Endothelial cell of umbilical vein (primary cell): ENCODE measurements at regions of chr6 and their contacts with region 1.

Region 1: DNA sequence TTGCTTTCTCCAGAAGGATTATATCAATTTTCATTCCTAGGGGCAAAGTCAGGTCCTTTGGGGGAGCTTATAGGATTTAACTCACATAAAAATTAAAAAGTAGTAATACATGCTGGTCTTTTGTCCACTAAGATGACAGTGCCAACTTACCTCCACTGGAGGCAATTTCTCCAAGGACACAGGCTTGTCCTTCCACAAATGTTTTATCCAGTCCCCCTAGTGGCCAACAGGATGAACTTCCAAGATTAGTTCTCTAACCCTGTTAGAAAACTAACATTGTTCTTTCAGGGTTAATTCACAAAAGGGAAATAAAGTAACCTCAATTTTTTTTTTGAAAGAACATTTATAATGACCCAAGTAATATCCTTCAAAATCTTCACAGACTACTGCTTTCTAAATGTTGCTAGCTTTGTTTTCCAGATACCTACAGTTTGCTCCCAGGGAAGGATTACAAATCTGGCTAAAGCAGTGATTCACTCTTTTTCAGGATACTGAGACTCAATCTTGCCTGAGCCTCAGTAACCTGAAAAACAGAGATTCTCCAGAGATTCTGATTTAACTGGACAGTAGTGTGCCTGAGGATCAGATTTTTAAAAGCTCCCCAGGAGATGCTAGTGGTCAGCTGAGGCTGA is 31.7 kb upstream of the UBR2 start:
- DNase-seq: peak; percentile 37
- H3K4me3 ChIP-seq: no peak overlapping the region
- H3K27ac ChIP-seq: no peak overlapping the region
- H3K4me1 ChIP-seq: no peaks in the 10 kb centered on the region
- H3K27me3 ChIP-seq: peaks cover 0 to 2% of the 10 kb centered on the region in 2 experiments
- CTCF ChIP-seq: peak; percentile 70 to 76
- POLR2A ChIP-seq: no peak

Region 2: DNA sequence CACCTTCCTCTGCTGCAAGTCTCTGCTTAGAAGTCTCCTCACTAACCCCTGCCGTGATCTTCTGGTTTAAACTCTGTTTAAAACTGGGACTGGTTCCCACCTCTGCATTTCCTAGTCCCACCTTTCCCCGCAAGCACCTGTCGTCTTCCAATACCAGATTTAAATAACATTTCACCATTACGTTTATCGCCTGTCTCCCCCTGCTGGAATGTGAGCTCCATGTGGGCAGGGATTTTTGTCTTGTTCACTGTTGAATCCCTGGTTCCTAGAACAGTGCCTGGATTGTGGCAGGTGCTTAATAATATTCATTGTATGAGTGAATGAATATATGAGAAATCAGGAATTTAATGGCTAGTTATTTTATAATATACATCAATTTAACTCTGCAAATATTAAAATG is 356.3 kb before region 1 on chr6:
- CTCF ChIA-PET with region 1: no interaction called
- POLR2A ChIA-PET with region 1: no interaction called
- dilution Hi-C with region 1: no loop called
- intact Hi-C with region 1: no loop called
- DNase-seq: no peak
- H3K4me3 ChIP-seq: no peak overlapping the region
- H3K27ac ChIP-seq: no peak overlapping the region
- H3K4me1 ChIP-seq: no peaks in the 10 kb centered on the region
- H3K27me3 ChIP-seq: peaks cover 2 to 6% of the 10 kb centered on the region in 2 experiments
- CTCF ChIP-seq: peak in 1 of 2 donors; percentile 21
- POLR2A ChIP-seq: no peak

Region 3: GRCh38 chr6:42260972-42261371 is 271.2 kb before region 1 on chr6:
- CTCF ChIA-PET with region 1: interaction called, 17 read pairs
- POLR2A ChIA-PET with region 1: no interaction called
- dilution Hi-C with region 1: no loop called
- intact Hi-C with region 1: loop called (anchors 5 kb)
- DNase-seq: no peak
- H3K4me3 ChIP-seq: no peak overlapping the region
- H3K27ac ChIP-seq: no peak overlapping the region
- H3K4me1 ChIP-seq: peaks cover 12% of the 10 kb centered on the region
- H3K27me3 ChIP-seq: peaks cover 0 to 3% of the 10 kb centered on the region in 2 experiments
- CTCF ChIP-seq: peak; percentile 27 to 56
- POLR2A ChIP-seq: no peak

Region 4: GRCh38 chr6:42453031-42453653 is 79.0 kb before region 1 on chr6:
- CTCF ChIA-PET with region 1: no interaction called
- POLR2A ChIA-PET with region 1: no interaction called
- dilution Hi-C with region 1: no loop called
- intact Hi-C with region 1: loop called (anchors 5 kb)
- DNase-seq: peak; percentile 52
- H3K4me3 ChIP-seq: peak overlapping the region; percentile 49 to 73 (median 51)
- H3K27ac ChIP-seq: no peak overlapping the region
- H3K4me1 ChIP-seq: peaks cover 9% of the 10 kb centered on the region
- H3K27me3 ChIP-seq: peaks cover 11 to 37% of the 10 kb centered on the region in 2 experiments
- CTCF ChIP-seq: no peak
- POLR2A ChIP-seq: no peak